IMR-90 (cell line): ENCODE measurements at regions of chr18 and their contacts with region 1.

Region 1: DNA sequence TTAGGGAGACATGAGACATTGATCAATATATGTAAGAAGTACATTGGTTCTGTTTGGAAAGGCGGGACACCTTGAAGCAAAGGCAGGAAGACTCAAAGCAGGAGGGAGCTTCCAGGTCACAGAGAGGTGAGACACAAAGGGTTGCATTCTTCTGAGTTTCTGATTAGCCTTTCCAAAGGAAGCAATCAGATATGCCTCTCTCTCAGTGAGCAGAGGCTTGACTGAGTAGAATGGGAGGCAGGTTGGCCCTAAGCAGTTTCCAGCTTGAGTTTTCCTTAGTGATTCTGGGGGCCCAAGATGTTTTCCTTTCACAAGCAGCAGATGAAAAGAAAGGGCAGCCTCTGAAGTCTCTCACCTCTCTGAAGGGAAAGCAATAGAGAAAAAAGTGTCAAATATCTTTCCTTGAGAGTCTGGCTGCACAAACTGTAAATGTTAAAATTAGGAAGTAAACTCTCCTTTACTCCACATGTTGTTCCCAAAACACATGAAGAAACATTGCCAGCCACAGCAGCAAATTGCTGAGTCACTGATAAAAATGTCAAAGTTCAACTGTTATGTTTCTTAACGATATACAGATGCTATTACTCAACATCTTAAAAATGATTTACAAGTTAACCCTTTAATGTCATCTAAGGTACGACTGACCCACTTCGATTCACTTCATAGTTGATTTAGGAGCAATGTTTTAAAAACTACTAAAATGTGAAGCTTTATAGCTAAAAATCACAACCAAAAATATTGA is 40.3 kb downstream of the CYB5A start:
- DNase-seq: peak; percentile 72
- ATAC-seq: peak; percentile 50
- H3K4me3 ChIP-seq: no peak overlapping the region
- H3K27ac ChIP-seq: peak overlapping the region; percentile 86; the same call in 1 of the 2 replicates
- H3K4me1 ChIP-seq: peaks cover 15% of the 10 kb centered on the region
- H3K27me3 ChIP-seq: no peaks in the 10 kb centered on the region
- CTCF ChIP-seq: no peak
- POLR2A ChIP-seq: no peak
- RAD21 ChIP-seq: no peak

Region 2: GRCh38 chr18:73824671-73825070 is 426.8 kb before region 1 on chr18:
- CTCF ChIA-PET with region 1: no interaction called
- POLR2A ChIA-PET with region 1: no interaction called
- dilution Hi-C with region 1: no loop called
- in situ Hi-C with region 1: no loop called
- intact Hi-C with region 1: no loop called
- DNase-seq: peak; percentile 75
- ATAC-seq: peak; percentile 93
- H3K4me3 ChIP-seq: no peak overlapping the region
- H3K27ac ChIP-seq: peak overlapping the region; percentile 46; the same call in 1 of the 2 replicates
- H3K4me1 ChIP-seq: peaks cover 13% of the 10 kb centered on the region
- H3K27me3 ChIP-seq: no peaks in the 10 kb centered on the region
- CTCF ChIP-seq: no peak
- POLR2A ChIP-seq: no peak
- RAD21 ChIP-seq: no peak

Region 3: GRCh38 chr18:74063023-74063422 is 188.4 kb before region 1 on chr18:
- CTCF ChIA-PET with region 1: no interaction called
- POLR2A ChIA-PET with region 1: no interaction called
- dilution Hi-C with region 1: no loop called
- in situ Hi-C with region 1: no loop called
- intact Hi-C with region 1: no loop called
- DNase-seq: no peak
- ATAC-seq: no peak
- H3K4me3 ChIP-seq: no peak overlapping the region
- H3K27ac ChIP-seq: no peak overlapping the region
- H3K4me1 ChIP-seq: no peaks in the 10 kb centered on the region
- H3K27me3 ChIP-seq: peaks cover 25% of the 10 kb centered on the region
- CTCF ChIP-seq: no peak
- POLR2A ChIP-seq: no peak
- RAD21 ChIP-seq: no peak

Region 4: DNA sequence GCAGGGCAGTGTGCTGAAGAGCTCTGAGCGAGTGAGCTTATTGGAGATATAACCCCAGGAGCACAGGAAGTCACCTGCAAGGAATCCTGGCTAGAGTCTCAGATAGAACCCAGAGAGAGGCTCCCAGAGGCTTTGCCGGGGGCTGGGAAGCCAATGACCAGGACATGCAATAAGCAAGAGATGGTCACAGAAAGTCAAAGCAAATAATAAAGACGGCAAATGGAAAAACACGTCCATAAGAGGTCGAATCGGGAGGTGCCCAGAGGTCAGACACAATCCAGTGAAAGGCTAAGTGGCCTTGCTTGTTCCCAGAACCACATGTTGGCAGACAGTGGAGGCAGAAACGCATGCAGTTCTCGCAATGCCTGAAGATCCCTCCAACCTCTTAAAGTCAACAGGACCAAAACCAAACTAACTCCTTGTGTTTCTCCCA is 37.2 kb after region 1 on chr18:
- CTCF ChIA-PET with region 1: interaction called, 3 read pairs
- POLR2A ChIA-PET with region 1: no interaction called
- dilution Hi-C with region 1: no loop called
- in situ Hi-C with region 1: no loop called
- intact Hi-C with region 1: loop called (anchors 5 kb)
- DNase-seq: no peak
- ATAC-seq: no peak
- H3K4me3 ChIP-seq: no peak overlapping the region
- H3K27ac ChIP-seq: peak overlapping the region; percentile 52; the same call in 1 of the 2 replicates
- H3K4me1 ChIP-seq: peaks cover 17% of the 10 kb centered on the region
- H3K27me3 ChIP-seq: no peaks in the 10 kb centered on the region
- CTCF ChIP-seq: no peak
- POLR2A ChIP-seq: no peak
- RAD21 ChIP-seq: no peak

Region 5: GRCh38 chr18:74316259-74317170 is 65.0 kb after region 1 on chr18:
- CTCF ChIA-PET with region 1: no interaction called
- POLR2A ChIA-PET with region 1: no interaction called
- dilution Hi-C with region 1: no loop called
- in situ Hi-C with region 1: no loop called
- intact Hi-C with region 1: loop called (anchors 5 kb)
- DNase-seq: peak; percentile 84
- ATAC-seq: peak; percentile 97
- H3K4me3 ChIP-seq: no peak overlapping the region
- H3K27ac ChIP-seq: peak overlapping the region; percentile 78
- H3K4me1 ChIP-seq: peaks cover 5% of the 10 kb centered on the region
- H3K27me3 ChIP-seq: no peaks in the 10 kb centered on the region; the same call in 1 of the 2 replicates
- CTCF ChIP-seq: no peak
- POLR2A ChIP-seq: no peak
- RAD21 ChIP-seq: no peak